Testis (tissue), 5 donors: ENCODE measurements at regions of chr16 and their contacts with region 1.

Region 1: GRCh38 chr16:21584817-21585216 is 14.6 kb upstream of the METTL9 start:
- DNase-seq: no peak
- H3K4me3 ChIP-seq: no peak overlapping the region
- H3K27ac ChIP-seq: no peak overlapping the region
- H3K4me1 ChIP-seq: no peaks in the 10 kb centered on the region
- H3K27me3 ChIP-seq: no peaks in the 10 kb centered on the region
- CTCF ChIP-seq: no peak
- POLR2A ChIP-seq: no peak

Region 2: DNA sequence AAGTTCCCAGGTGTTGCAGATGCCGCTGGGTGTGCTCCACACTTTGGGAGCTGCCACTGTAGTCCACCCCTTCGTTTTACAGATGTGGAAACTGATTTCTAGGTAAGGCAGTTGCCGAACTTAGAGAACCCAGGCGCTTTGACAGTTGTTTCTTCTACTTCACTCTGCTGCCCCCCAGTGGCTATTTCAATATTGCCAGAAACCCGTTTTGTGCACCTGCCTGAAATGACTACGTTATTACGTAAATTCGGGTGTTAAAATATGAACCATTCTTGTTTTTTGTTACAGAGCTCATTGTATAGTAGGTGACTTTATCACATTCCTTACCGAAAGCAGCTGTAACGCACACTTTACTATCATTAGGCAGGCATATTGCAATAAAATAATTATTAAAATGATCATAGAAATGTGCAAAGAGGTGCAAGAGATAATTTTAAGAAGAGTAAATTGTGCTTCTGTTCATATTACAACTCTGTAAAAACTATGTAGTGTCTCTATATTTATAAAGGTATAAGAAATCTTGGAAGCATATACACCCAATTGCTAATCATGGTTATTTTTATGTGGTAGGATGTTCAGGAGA is 123.8 kb after region 1 on chr16:
- intact Hi-C with region 1: loop called (anchors 5 kb)
- DNase-seq: peak; percentile 89
- H3K4me3 ChIP-seq: no peak overlapping the region
- H3K27ac ChIP-seq: no peak overlapping the region
- H3K4me1 ChIP-seq: no peaks in the 10 kb centered on the region
- H3K27me3 ChIP-seq: no peaks in the 10 kb centered on the region
- CTCF ChIP-seq: peak; percentile 49 to 92 (median 80)
- POLR2A ChIP-seq: no peak

Region 3: GRCh38 chr16:22694887-22695382 is 1110.1 kb after region 1 on chr16:
- intact Hi-C with region 1: loop called (anchors 5 kb)
- DNase-seq: peak; percentile 32
- H3K4me3 ChIP-seq: no peak overlapping the region
- H3K27ac ChIP-seq: peak overlapping the region; percentile 0 to 75
- H3K4me1 ChIP-seq: peaks cover 10% of the 10 kb centered on the region
- H3K27me3 ChIP-seq: no peaks in the 10 kb centered on the region
- CTCF ChIP-seq: no peak
- POLR2A ChIP-seq: no peak